ENCODE measurements at regions of chr1 and their contacts with region 1.

Region 1: GRCh38 chr1:173095632-173096031 is 44.9 kb upstream of the TNFSF18 start:
- DNase-seq: no peak
- ATAC-seq: peak in 3 of 8 donors; percentile 31 to 91 (median 55)
- H3K4me3 ChIP-seq: no peak overlapping the region
- H3K27ac ChIP-seq: no peak overlapping the region
- H3K4me1 ChIP-seq: peaks cover 0 to 13% (median 0%) of the 10 kb centered on the region in 9 donors
- H3K27me3 ChIP-seq: no peaks in the 10 kb centered on the region
- CTCF ChIP-seq: no peak

Region 2: DNA sequence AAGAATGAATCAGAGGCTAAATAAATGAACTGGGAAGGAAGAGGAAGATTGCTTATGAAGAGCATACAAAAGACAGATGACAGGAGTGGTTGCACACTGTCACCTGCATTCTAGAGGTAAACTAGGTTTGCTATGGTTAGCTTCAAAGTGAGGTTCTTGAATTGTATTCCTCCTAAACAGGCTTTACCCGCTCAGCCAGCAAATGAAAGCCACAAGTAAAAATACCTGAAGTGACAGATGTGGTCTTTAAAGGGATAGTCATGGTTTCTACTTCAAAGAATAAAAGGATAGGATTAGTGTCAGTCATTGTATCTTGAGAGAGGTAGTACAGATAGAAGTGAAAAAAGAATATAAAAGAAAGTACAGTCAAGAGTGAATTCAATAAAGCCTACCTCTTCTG is 349.1 kb after region 1 on chr1:
- intact Hi-C with region 1: loop called in 1 of 10 experiments (anchors 10 kb)
- DNase-seq: no peak
- ATAC-seq: no peak
- H3K4me3 ChIP-seq: no peak overlapping the region
- H3K27ac ChIP-seq: no peak overlapping the region
- H3K4me1 ChIP-seq: peaks cover 0 to 11% (median 0%) of the 10 kb centered on the region in 9 donors
- H3K27me3 ChIP-seq: no peaks in the 10 kb centered on the region
- CTCF ChIP-seq: no peak

Measured in heart right ventricle (tissue), 16 donors.